Right ventricle myocardium inferior (tissue), 1 donor: ENCODE measurements at regions of chr3 and their contacts with region 1.

Region 1: DNA sequence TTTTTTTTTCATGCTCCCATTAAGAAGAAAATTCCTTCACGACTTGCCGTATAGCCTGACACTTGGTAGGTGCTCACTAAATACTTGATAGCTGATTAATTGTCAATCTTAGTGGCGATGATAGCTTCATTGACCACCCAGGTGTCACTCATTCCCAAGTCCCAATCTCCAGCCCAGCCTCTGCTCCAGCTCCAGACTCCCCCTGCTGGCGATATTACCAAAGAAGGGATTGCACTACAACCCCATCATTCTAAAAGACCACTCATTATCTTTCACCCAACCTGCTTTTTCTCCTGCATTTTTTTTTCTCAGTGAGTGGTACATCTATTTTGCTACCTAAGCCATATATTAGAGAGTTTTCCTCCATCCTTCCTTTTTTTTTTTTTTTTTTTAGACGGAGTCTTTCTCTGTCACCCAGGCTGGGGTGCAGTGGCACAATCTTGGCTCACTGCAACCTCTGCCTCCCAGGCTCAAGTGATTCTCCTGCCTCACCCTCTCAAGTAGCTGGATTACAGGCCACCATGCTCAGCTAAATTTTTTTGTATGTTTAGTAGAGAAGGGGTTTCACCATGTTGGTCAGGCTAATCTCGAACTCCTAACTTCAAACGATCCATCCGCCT is 19.5 kb upstream of the COMMD2 start:
- DNase-seq: no peak
- ATAC-seq: no peak

Region 2: GRCh38 chr3:149494022-149494758 is 277.6 kb before region 1 on chr3:
- intact Hi-C with region 1: loop called (anchors 5 kb)
- DNase-seq: no peak
- ATAC-seq: peak; percentile 62

Region 3: GRCh38 chr3:149512209-149512782 is 259.5 kb before region 1 on chr3:
- intact Hi-C with region 1: loop called (anchors 5 kb)
- DNase-seq: peak; percentile 67
- ATAC-seq: peak; percentile 75